Heart left ventricle (tissue), 16 donors: ENCODE measurements at regions of chr11 and their contacts with region 1.

Region 1: GRCh38 chr11:63738720-63739360 is 29.7 kb downstream of the ZFTA start:
- DNase-seq: peak in 4 of 5 donors; percentile 43 to 60 (median 52)
- ATAC-seq: peak in 3 of 4 donors; percentile 42 to 67 (median 65)
- H3K4me3 ChIP-seq: no peak overlapping the region
- H3K27ac ChIP-seq: no peak overlapping the region
- H3K4me1 ChIP-seq: peaks cover 0 to 10% (median 2%) of the 10 kb centered on the region in 12 donors
- H3K27me3 ChIP-seq: no peaks in the 10 kb centered on the region
- CTCF ChIP-seq: peak; percentile 92 to 98 (median 96)
- POLR2A ChIP-seq: no peak

Region 2: GRCh38 chr11:63478896-63479295 is 259.9 kb before region 1 on chr11:
- intact Hi-C with region 1: loop called (anchors 2 to 10 kb)
- DNase-seq: peak in 2 of 5 donors; percentile 33 to 49
- ATAC-seq: peak; percentile 32 to 85 (median 82)
- H3K4me3 ChIP-seq: no peak overlapping the region
- H3K27ac ChIP-seq: no peak overlapping the region
- H3K4me1 ChIP-seq: no peaks in the 10 kb centered on the region
- H3K27me3 ChIP-seq: no peaks in the 10 kb centered on the region
- CTCF ChIP-seq: peak; percentile 82 to 96 (median 90)
- POLR2A ChIP-seq: no peak

Region 3: DNA sequence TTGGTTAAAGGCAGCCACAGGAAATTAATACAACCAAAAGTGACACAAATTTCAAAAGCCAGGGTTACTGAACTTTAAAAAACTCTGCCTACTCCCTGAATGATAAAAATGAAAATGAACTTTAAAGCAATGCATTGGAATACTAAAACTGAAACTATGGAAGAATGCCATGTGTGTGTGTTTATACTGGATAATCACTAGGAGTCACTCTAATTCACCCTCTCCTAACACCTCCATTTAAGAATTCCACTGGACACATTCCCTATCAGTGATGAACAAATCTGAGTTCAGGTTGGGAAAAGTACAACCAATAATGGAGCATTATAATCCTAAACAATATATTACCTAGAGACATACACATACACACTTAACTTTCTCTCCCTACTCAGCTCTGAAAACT is 97.1 kb before region 1 on chr11:
- intact Hi-C with region 1: loop called in 8 of 10 experiments (anchors 5 to 10 kb)
- DNase-seq: no peak
- ATAC-seq: peak in 1 of 4 donors; percentile 29
- H3K4me3 ChIP-seq: no peak overlapping the region
- H3K27ac ChIP-seq: no peak overlapping the region
- H3K4me1 ChIP-seq: peaks cover 0 to 8% (median 0%) of the 10 kb centered on the region in 12 donors
- H3K27me3 ChIP-seq: no peaks in the 10 kb centered on the region
- CTCF ChIP-seq: peak in 3 of 12 donors; percentile 16 to 28 (median 20)
- POLR2A ChIP-seq: no peak

Region 4: GRCh38 chr11:63671322-63672155 is 67.3 kb before region 1 on chr11 and contains the start of gene ATL3:
- intact Hi-C with region 1: loop called in 3 of 10 experiments (anchors 2 to 10 kb)
- DNase-seq: peak; percentile 98
- ATAC-seq: peak; percentile 96 to 98 (median 96)
- H3K4me3 ChIP-seq: peak within 1 kb of the TSS; percentile 66 to 99 (median 89)
- H3K27ac ChIP-seq: peak within 1 kb of the TSS; percentile 90 to 99 (median 98)
- H3K4me1 ChIP-seq: peaks cover 2 to 48% (median 36%) of the 10 kb centered on the region in 12 donors
- H3K27me3 ChIP-seq: no peaks in the 10 kb centered on the region
- CTCF ChIP-seq: peak in 5 of 12 donors; percentile 14 to 41 (median 24)
- POLR2A ChIP-seq: peak in 1 of 2 donors; percentile 71
- total RNA-seq, gene ATL3: 10.4 to 30.4 (median 13.8) TPM

Region 5: DNA sequence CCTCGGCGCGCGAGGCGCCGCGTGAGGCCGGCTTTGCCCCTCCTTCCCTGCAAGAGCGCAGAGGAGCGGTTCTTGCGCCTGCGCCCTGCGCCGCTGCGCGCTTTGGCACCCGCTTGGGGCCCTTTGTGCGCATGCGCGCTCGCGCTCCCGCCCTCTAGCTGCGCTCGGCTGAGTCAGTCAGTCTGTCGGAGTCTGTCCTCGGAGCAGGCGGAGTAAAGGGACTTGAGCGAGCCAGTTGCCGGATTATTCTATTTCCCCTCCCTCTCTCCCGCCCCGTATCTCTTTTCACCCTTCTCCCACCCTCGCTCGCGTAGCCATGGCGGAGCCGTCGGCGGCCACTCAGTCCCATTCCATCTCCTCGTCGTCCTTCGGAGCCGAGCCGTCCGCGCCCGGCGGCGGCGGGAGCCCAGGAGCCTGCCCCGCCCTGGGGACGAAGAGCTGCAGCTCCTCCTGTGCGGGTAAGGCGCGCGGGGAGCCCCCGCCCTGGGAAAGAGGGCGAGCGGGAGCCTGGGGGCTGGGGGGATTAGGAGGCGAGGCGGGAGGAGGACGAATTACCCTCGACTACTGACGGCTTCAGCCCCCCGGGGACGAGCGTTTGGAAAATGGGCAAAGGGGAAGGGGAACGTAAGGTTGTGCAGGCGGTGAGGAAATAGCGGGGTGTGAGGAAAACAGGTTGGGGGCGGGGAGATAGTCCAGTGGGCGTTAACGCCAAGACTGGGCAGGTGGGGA is 57.4 kb before region 1 on chr11 and contains the start of gene RTN3:
- intact Hi-C with region 1: loop called in 4 of 10 experiments (anchors 5 to 10 kb)
- DNase-seq: peak; percentile 96 to 99 (median 97)
- ATAC-seq: peak; percentile 94 to 97 (median 96)
- H3K4me3 ChIP-seq: peak within 1 kb of the TSS; percentile 40 to 98 (median 89)
- H3K27ac ChIP-seq: peak within 1 kb of the TSS; percentile 66 to 98 (median 94)
- H3K4me1 ChIP-seq: peaks cover 0 to 42% (median 19%) of the 10 kb centered on the region in 12 donors
- H3K27me3 ChIP-seq: no peaks in the 10 kb centered on the region
- CTCF ChIP-seq: peak in 7 of 12 donors; percentile 2 to 76 (median 45)
- POLR2A ChIP-seq: peak in 1 of 2 donors; percentile 97
- total RNA-seq, gene RTN3: 36.2 to 82.9 (median 72.2) TPM